Thyroid gland (tissue), 4 donors: ENCODE measurements at regions of chr10 and their contacts with region 1.

Region 1: GRCh38 chr10:73743905-73744663 is at the start of gene SEC24C:
- DNase-seq: peak; percentile 96 to 97
- H3K4me3 ChIP-seq: peak within 1 kb of the TSS; percentile 21 to 70 (median 65)
- H3K27ac ChIP-seq: peak within 1 kb of the TSS; percentile 91 to 97 (median 94)
- H3K4me1 ChIP-seq: peaks cover 18 to 30% of the 10 kb centered on the region in 2 donors
- H3K27me3 ChIP-seq: no peaks in the 10 kb centered on the region
- CTCF ChIP-seq: peak in 1 of 6 experiments; percentile 5
- POLR2A ChIP-seq: peak in 1 of 2 donors; percentile 79
- total RNA-seq, gene SEC24C: 56.2 to 95.2 (median 83.9) TPM

Region 2: DNA sequence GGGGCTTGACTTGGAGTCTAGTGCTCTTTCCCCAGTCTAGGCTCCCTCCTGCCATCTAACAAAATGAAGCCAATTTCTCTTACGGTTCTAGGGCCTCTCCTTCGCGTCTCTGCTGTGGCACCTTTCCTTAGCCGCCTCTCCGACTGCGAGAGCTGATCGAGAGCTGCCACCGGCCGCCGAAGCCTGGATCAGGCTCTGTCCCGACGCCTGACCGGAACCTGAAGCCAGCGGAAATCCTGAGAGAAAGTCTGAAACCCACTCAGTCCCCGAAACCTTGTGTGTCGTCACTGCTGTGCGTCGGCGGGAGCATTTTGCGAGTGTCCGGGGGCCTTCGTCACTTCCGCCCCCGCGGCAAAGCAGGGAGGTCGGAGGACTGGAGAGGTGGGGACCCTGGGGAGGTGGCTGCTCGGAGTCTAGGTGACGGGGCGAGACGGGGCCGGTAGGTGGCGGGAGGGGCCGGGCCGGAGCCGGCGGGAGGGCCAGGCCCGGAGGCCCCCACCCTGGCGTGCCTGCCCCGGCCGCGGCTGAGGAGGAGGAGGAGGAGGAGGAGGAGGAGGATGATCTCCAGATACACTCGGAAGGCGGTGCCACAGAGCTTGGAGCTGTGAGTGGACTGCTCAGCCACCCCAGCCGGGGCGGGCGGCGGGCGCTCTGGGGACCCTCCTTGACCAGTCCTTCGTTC is 576.2 kb before region 1 on chr10 and contains the starts of genes ECD and FAM149B1:
- intact Hi-C with region 1: loop called (anchors 10 kb)
- DNase-seq: peak; percentile 92 to 95
- H3K4me3 ChIP-seq: peak within 1 kb of the TSS; percentile 58 to 94 (median 87)
- H3K27ac ChIP-seq: peak within 1 kb of the TSS; percentile 89 to 93 (median 91)
- H3K4me1 ChIP-seq: peaks cover 12 to 24% of the 10 kb centered on the region in 2 donors
- H3K27me3 ChIP-seq: no peaks in the 10 kb centered on the region
- CTCF ChIP-seq: peak in 3 of 6 experiments; percentile 16 to 44 (median 21)
- POLR2A ChIP-seq: peak; percentile 45 to 92
- total RNA-seq, gene ECD: 31.3 to 44.4 (median 37.0) TPM
- total RNA-seq, gene FAM149B1: 20.2 to 21.4 (median 20.9) TPM

Region 3: GRCh38 chr10:73908853-73909538 is 164.9 kb after region 1 on chr10:
- intact Hi-C with region 1: no loop called
- DNase-seq: peak; percentile 48 to 49
- H3K4me3 ChIP-seq: no peak overlapping the region
- H3K27ac ChIP-seq: peak overlapping the region in 2 of 3 donors; percentile 17 to 20
- H3K4me1 ChIP-seq: peaks cover 22 to 59% of the 10 kb centered on the region in 2 donors
- H3K27me3 ChIP-seq: no peaks in the 10 kb centered on the region
- CTCF ChIP-seq: no peak
- POLR2A ChIP-seq: no peak

Region 4: DNA sequence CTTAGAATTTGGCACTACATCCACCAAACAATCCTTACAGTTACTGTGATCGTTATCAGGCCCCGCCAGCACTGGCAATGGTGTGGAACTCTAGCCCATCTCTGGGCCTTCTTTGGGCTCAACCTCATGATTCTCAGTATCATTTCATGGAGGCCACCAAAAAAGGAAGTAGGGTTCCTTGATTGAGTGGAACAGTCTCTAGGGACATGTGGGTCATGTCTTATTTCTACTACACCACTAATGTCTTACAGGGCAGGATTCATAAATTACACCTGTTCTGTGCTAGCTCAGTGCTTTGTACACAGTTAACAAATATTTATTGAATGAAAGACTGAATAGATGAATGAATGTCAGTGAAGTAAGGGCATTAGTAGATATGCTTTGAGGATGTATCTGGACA is 352.7 kb after region 1 on chr10:
- intact Hi-C with region 1: no loop called
- DNase-seq: no peak
- H3K4me3 ChIP-seq: no peak overlapping the region
- H3K27ac ChIP-seq: no peak overlapping the region
- H3K4me1 ChIP-seq: no peaks in the 10 kb centered on the region
- H3K27me3 ChIP-seq: no peaks in the 10 kb centered on the region
- CTCF ChIP-seq: no peak
- POLR2A ChIP-seq: no peak